ENCODE measurements at regions of chr1 and their contacts with region 1.

Region 1: GRCh38 chr1:145927063-145927886 is at the start of gene RBM8A:
- DNase-seq: peak; percentile 87 to 99
- ATAC-seq: peak; percentile 96 to 99 (median 96)
- H3K4me3 ChIP-seq: peak within 1 kb of the TSS; percentile 64
- H3K4me3 Mint-ChIP-seq: no peak within 1 kb of the TSS
- H3K27ac ChIP-seq: peak within 1 kb of the TSS; percentile 100
- H3K27ac Mint-ChIP-seq: no peak within 1 kb of the TSS
- H3K4me1 ChIP-seq: peaks cover 25% of the 10 kb centered on the region
- H3K4me1 Mint-ChIP-seq: peaks cover 14 to 20% of the 10 kb centered on the region in 2 donors
- H3K27me3 ChIP-seq: no peaks in the 10 kb centered on the region
- H3K27me3 Mint-ChIP-seq: no peaks in the 10 kb centered on the region
- CTCF ChIP-seq: peak; percentile 73
- total RNA-seq, gene RBM8A: 172 to 204 (median 200) TPM

Region 2: DNA sequence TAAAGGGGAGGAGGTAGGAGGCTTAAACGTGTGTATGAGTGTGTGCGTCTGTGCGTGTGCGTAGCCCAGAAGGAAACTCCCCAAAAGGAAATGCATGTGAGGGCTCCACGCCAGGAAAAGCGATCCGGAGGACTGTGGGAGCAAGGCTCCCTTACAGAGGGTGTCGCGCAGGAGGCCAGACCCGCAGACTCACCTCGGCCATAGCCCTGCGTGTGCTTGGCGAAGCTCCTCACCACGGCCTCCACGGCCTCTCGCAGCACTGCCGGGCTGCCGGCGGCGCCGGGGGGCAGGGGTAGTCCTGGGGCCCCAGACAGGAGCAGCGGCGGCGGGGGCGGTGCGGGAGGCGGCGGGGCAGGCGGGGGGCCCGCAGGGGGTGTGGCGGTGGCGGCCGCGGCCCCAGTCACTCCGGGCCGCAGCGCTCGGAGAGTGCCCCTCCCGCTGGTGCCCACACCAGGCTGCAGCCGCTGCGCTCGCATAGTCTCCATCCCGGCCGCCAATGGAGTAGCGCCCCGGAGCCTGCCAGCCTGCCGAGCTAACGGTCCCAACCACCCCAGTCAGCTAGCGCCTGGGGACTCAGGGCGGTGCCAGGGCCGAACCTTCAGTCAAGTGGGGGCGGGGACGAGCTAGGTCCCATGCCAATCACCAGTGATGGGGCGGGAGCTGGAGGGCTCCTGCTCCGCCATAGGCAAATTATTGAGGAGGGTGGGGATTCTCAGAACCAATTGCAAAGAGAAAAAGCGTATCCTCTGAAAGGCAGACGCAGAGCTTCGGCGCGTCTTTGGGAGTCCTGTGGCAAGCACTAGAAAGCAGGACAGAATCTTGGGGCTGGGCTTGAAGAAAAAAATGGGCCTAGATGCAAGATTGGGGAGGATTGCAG is 30.4 kb after region 1 on chr1 and contains the start of gene LIX1L:
- intact Hi-C with region 1: loop called (anchors 2 kb)
- DNase-seq: peak; percentile 88 to 98
- ATAC-seq: peak; percentile 87 to 98 (median 91)
- H3K4me3 ChIP-seq: peak within 1 kb of the TSS; percentile 88
- H3K4me3 Mint-ChIP-seq: peak within 1 kb of the TSS; percentile 96
- H3K27ac ChIP-seq: peak within 1 kb of the TSS; percentile 85
- H3K27ac Mint-ChIP-seq: peak within 1 kb of the TSS; percentile 86 to 87
- H3K4me1 ChIP-seq: peaks cover 44% of the 10 kb centered on the region
- H3K4me1 Mint-ChIP-seq: peaks cover 77 to 83% of the 10 kb centered on the region in 2 donors
- H3K27me3 ChIP-seq: no peaks in the 10 kb centered on the region
- H3K27me3 Mint-ChIP-seq: no peaks in the 10 kb centered on the region
- CTCF ChIP-seq: no peak
- total RNA-seq, gene LIX1L: 33.4 to 41.3 (median 38.2) TPM

Region 3: DNA sequence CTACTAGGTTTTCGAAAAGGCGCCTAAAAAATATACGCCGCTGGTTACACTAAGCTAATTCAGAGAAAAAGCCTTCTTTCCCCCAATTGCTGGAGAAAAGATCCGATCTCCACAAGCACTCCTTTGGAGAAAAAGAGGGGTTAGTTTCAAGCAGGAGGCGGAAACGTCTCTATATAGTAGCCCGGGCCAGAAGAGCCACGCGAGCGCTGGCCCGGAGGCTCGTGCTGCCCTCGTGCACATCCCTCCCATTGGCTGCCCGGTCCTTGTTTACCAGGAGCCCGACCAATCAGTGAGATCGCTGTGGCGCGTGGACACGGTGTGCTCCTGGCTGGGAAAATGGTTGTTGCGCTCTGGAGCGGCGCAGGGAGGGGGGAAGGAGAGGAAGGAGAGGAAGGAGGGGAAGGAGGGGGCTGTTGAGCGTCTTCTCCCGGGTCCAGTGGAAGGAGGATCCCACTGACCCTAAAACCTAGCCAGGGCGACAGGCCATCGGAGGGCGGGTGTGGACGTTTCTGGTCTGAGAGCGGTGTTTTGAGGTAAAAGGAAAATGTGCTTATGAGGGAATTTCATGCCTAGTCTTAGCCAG is 69.2 kb after region 1 on chr1 and contains the start of gene TXNIP:
- intact Hi-C with region 1: loop called (anchors 5 kb)
- DNase-seq: peak; percentile 91 to 95
- ATAC-seq: peak; percentile 85 to 97 (median 95)
- H3K4me3 ChIP-seq: peak within 1 kb of the TSS; percentile 64
- H3K4me3 Mint-ChIP-seq: peak within 1 kb of the TSS; percentile 97
- H3K27ac ChIP-seq: peak within 1 kb of the TSS; percentile 88
- H3K27ac Mint-ChIP-seq: peak within 1 kb of the TSS; percentile 97 to 99
- H3K4me1 ChIP-seq: peaks cover 48% of the 10 kb centered on the region
- H3K4me1 Mint-ChIP-seq: peaks cover 71 to 76% of the 10 kb centered on the region in 2 donors
- H3K27me3 ChIP-seq: no peaks in the 10 kb centered on the region
- H3K27me3 Mint-ChIP-seq: no peaks in the 10 kb centered on the region
- CTCF ChIP-seq: no peak
- total RNA-seq, gene TXNIP: 984 to 1,724 (median 1,422) TPM